ENCODE measurements at regions of chr6 and their contacts with region 1.

Region 1: DNA sequence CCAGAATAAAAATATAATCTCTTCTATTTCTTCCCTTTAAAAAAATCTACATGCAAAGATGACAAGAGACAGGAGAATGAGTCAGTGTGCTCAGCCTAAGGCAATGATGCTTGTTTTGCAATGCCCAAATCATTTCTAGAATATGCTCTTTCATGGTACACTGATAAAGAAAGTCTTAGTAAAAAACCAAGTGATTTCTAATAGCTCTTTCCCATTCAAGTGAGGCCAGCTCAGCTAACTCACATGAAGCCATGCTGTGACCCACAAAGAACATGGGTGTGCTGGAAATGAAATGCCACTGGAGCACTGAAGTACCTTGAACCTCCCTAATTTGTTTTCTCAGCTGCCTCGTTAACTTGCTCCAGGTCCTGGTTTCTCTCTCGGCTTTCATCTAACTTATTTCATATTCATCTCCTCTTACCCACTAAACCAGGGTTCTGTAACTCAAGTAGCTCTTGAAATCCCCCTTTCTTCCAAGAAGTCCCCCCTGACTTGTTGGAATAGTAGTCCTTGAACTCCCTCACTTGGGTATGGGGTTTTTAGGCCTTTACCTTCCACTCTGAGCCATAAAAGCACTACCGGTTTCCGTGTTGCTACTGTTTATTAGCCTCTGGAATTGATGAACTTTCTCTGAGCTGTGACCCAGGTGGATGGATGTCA is 92.7 kb downstream of the IRF4 start:
- DNase-seq: peak; percentile 75
- H3K4me3 Mint-ChIP-seq: peak overlapping the region; percentile 58
- H3K27ac Mint-ChIP-seq: peak overlapping the region; percentile 99
- H3K4me1 Mint-ChIP-seq: peaks cover 73% of the 10 kb centered on the region
- H3K27me3 Mint-ChIP-seq: no peaks in the 10 kb centered on the region

Region 2: DNA sequence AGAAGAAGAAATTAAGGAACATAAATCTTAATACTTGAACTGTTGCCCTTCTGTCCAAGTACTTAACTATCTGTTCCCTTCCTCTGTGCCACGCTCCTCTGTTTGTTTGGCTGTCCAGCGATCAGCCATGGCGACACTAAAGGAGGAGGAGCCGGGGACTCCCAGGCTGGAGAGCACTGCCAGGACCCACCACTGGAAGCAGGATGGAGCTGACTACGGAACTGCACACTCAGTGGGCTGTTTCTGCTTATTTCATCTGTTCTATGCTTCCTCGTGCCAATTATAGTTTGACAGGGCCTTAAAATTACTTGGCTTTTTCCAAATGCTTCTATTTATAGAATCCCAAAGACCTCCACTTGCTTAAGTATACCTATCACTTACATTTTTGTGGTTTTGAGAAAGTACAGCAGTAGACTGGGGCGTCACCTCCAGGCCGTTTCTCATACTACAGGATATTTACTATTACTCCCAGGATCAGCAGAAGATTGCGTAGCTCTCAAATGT is 75.6 kb before region 1 on chr6:
- CTCF ChIA-PET with region 1: no interaction called
- POLR2A ChIA-PET with region 1: interaction called, 22 read pairs
- intact Hi-C with region 1: loop called (anchors 1 kb)
- DNase-seq: no peak
- H3K4me3 Mint-ChIP-seq: peak overlapping the region; percentile 14
- H3K27ac Mint-ChIP-seq: peak overlapping the region; percentile 62
- H3K4me1 Mint-ChIP-seq: peaks cover 66% of the 10 kb centered on the region
- H3K27me3 Mint-ChIP-seq: no peaks in the 10 kb centered on the region

Region 3: GRCh38 chr6:436308-437036 is 47.7 kb before region 1 on chr6:
- CTCF ChIA-PET with region 1: interaction called, 4 read pairs
- POLR2A ChIA-PET with region 1: interaction called, 16 read pairs
- intact Hi-C with region 1: loop called (anchors 1 kb)
- DNase-seq: no peak
- H3K4me3 Mint-ChIP-seq: no peak overlapping the region
- H3K27ac Mint-ChIP-seq: no peak overlapping the region
- H3K4me1 Mint-ChIP-seq: peaks cover 43% of the 10 kb centered on the region
- H3K27me3 Mint-ChIP-seq: no peaks in the 10 kb centered on the region

Region 4: GRCh38 chr6:467671-468082 is 16.5 kb before region 1 on chr6:
- CTCF ChIA-PET with region 1: interaction called, 4 read pairs
- POLR2A ChIA-PET with region 1: interaction called, 13 read pairs
- intact Hi-C with region 1: no loop called
- DNase-seq: peak; percentile 67
- H3K4me3 Mint-ChIP-seq: peak overlapping the region; percentile 16
- H3K27ac Mint-ChIP-seq: no peak overlapping the region
- H3K4me1 Mint-ChIP-seq: peaks cover 54% of the 10 kb centered on the region
- H3K27me3 Mint-ChIP-seq: peaks cover 34% of the 10 kb centered on the region

Region 5: DNA sequence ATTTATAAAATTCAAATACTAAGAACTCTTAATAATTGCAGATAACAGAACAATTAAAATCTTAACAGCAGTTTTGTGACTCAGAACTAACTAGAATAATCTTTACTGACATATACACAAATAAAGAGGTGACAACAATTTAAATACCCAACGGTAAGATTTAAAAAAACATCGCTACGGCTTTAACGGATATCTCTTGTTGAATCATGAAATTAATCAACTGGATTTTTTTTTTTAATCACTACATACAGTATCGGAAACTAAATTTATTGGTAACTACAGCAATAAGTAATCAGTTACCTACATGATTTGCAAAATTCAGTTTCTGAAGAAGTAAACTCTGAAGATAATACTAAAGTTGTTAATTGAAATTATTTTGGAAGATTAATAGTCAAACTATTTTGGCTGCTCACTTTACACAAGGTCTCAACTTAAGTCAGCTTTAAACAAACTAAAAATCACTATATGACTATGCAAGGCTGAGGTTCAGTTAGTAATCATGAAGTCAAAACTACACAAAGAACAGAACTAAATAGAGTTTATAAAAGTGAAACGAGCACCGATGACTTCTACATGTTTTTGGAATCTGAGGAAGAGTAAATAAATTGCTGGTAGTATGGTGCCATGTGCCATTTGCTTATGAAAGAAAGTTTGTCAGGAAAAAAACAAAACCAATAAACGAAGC is 43.9 kb after region 1 on chr6:
- CTCF ChIA-PET with region 1: no interaction called
- POLR2A ChIA-PET with region 1: interaction called, 3 read pairs
- intact Hi-C with region 1: loop called (anchors 1 kb)
- DNase-seq: no peak
- H3K4me3 Mint-ChIP-seq: peak overlapping the region; percentile 16
- H3K27ac Mint-ChIP-seq: peak overlapping the region; percentile 87
- H3K4me1 Mint-ChIP-seq: peaks cover 30% of the 10 kb centered on the region
- H3K27me3 Mint-ChIP-seq: no peaks in the 10 kb centered on the region

Region 6: DNA sequence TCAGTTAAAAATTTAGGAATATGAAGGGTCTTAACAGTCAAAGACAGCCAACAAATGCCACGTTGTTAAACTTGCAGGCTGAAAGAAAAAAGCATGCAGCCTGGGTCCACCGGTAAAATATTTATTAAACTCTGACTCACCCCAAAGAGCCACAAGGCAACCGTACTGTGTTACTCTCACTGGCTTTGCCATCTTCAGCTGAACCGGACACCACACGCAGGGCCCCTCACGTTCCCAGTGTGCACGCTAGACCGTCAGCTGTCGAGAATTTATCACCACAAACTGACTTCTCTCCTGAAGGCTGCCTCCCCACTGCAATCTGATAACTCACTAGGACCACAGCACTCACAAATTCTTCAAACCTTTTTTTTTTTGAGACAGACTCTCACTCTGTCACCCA is 142.0 kb after region 1 on chr6:
- CTCF ChIA-PET with region 1: no interaction called
- POLR2A ChIA-PET with region 1: no interaction called
- intact Hi-C with region 1: no loop called
- DNase-seq: no peak
- H3K4me3 Mint-ChIP-seq: no peak overlapping the region
- H3K27ac Mint-ChIP-seq: no peak overlapping the region
- H3K4me1 Mint-ChIP-seq: peaks cover 8% of the 10 kb centered on the region
- H3K27me3 Mint-ChIP-seq: no peaks in the 10 kb centered on the region

Region 7: DNA sequence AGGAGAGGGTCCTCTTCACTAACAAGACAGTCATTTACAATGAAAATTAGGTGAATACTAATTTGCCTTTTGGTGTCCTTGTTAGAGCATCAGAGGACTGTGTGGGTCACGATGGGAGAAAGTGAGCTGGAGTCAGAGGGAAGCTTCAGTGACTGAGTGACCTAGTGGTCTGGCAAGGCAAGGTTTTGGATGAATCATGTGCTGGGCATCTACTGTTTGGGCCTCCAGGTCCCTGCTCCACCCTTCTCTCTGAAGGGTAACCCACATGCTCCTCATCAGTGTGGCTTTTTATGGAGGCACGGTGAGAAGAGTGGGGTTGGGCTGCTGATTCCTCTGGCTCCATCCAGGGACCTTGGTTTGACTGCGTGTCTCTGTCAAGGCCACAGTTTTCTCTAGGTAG is 269.3 kb after region 1 on chr6:
- CTCF ChIA-PET with region 1: no interaction called
- POLR2A ChIA-PET with region 1: no interaction called
- intact Hi-C with region 1: no loop called
- DNase-seq: no peak
- H3K4me3 Mint-ChIP-seq: no peak overlapping the region
- H3K27ac Mint-ChIP-seq: no peak overlapping the region
- H3K4me1 Mint-ChIP-seq: no peaks in the 10 kb centered on the region
- H3K27me3 Mint-ChIP-seq: no peaks in the 10 kb centered on the region